Common myeloid progenitor, CD34-positive (primary cell): ENCODE measurements at regions of chr2 and their contacts with region 1.

Region 1: GRCh38 chr2:147910990-147911473 is 66.2 kb downstream of the ACVR2A start:
- DNase-seq: peak; percentile 65 to 86 (median 77)
- H3K4me3 ChIP-seq: no peak overlapping the region
- H3K27ac ChIP-seq: no peak overlapping the region
- H3K4me1 ChIP-seq: peaks cover 0 to 6% (median 2%) of the 10 kb centered on the region in 4 experiments
- H3K27me3 ChIP-seq: no peaks in the 10 kb centered on the region

Region 2: GRCh38 chr2:147045113-147045512 is 865.9 kb before region 1 on chr2:
- CTCF ChIA-PET with region 1: interaction called, 47 read pairs
- POLR2A ChIA-PET with region 1: no interaction called
- DNase-seq: peak; percentile 42 to 65 (median 54)
- H3K4me3 ChIP-seq: no peak overlapping the region
- H3K27ac ChIP-seq: no peak overlapping the region
- H3K4me1 ChIP-seq: no peaks in the 10 kb centered on the region
- H3K27me3 ChIP-seq: no peaks in the 10 kb centered on the region

Region 3: GRCh38 chr2:147082850-147083522 is 828.0 kb before region 1 on chr2:
- CTCF ChIA-PET with region 1: interaction called, 57 read pairs
- POLR2A ChIA-PET with region 1: no interaction called
- DNase-seq: peak; percentile 43 to 78 (median 68)
- H3K4me3 ChIP-seq: no peak overlapping the region
- H3K27ac ChIP-seq: no peak overlapping the region
- H3K4me1 ChIP-seq: no peaks in the 10 kb centered on the region
- H3K27me3 ChIP-seq: no peaks in the 10 kb centered on the region

Region 4: DNA sequence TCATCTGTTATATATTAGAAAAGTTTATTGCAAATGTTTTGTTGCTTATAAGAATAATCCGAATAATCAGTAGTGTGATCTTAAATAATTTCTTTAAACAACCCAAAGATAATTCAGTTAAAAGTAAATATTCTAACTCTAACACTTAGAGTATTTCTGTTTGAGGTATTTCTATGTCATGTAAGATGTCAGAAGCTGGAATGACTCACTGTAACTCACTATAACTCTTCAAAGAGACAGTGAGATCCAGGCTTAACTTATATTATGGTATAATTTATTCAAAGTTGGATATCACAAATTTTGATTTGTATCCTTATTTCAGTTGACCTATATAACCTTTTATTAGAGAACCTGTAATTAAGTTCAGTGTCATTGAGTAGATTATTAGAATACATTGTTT is 116.8 kb after region 1 on chr2:
- CTCF ChIA-PET with region 1: no interaction called
- POLR2A ChIA-PET with region 1: no interaction called
- DNase-seq: no peak
- H3K4me3 ChIP-seq: no peak overlapping the region
- H3K27ac ChIP-seq: no peak overlapping the region
- H3K4me1 ChIP-seq: peaks cover 0 to 16% (median 10%) of the 10 kb centered on the region in 4 experiments
- H3K27me3 ChIP-seq: no peaks in the 10 kb centered on the region

Region 5: DNA sequence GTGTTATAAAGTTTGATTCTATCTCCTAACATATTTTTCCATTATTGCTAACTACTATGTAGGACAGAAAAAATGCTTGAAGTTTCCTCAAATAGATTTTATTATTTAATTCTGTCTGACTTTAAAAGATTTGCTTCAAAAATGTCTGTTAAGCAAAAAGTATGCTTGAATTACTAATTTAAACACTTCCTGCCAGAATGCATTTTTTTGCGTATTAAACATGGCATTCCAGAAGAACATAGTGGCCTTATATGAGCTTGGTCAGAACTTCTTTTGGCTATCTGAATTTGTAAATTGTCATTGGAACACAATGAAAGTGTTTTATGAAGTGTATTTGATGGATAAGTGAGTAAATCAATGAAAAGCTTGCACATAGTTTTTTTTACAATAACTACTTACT is 147.6 kb after region 1 on chr2:
- CTCF ChIA-PET with region 1: no interaction called
- POLR2A ChIA-PET with region 1: no interaction called
- DNase-seq: no peak
- H3K4me3 ChIP-seq: no peak overlapping the region
- H3K27ac ChIP-seq: no peak overlapping the region
- H3K4me1 ChIP-seq: no peaks in the 10 kb centered on the region
- H3K27me3 ChIP-seq: no peaks in the 10 kb centered on the region